ENCODE measurements at regions of chr12 and their contacts with region 1.

Region 1: DNA sequence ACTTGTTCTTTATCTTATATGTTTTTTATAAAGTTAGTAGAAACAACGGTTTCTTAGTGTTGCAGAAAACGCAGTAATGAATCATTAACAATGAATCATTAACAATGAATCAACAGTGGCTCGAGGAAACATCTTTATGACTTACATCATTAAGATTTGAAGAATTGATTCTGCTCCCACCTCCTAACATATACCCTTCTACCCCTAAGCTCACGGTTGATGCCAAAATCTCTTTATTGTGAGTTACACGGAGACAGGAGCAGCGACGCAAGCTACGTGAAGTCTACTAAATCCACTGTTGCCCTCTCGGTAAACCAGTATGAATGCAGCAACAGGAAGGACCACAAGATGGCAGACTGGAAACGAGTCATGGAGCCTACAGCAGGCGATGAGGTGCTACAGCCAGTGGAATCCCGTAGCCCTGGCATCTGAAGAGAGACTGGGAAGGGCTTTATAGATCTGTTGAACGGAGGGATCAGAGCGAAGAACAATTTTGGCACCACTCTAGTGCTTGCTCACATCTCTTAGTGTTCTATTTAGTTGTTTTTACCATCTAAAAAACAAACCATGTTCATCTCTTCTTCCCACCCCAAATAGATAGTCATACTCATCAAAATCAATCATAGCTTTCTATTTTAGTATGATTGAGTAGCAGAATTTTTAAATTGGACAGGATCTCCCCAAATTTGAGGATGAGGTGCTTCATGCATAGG is 332.7 kb downstream of the DUSP6 start:
- DNase-seq: peak; percentile 48 to 83 (median 64)
- ATAC-seq: peak; percentile 97
- H3K4me3 ChIP-seq: peak overlapping the region in 1 of 2 experiments; percentile 16
- H3K4me3 Mint-ChIP-seq: no peak overlapping the region
- H3K27ac ChIP-seq: no peak overlapping the region
- H3K27ac Mint-ChIP-seq: no peak overlapping the region
- H3K4me1 ChIP-seq: no peaks in the 10 kb centered on the region
- H3K4me1 Mint-ChIP-seq: peaks cover 3% of the 10 kb centered on the region
- H3K27me3 ChIP-seq: peaks cover 0 to 2% of the 10 kb centered on the region in 2 experiments
- H3K27me3 Mint-ChIP-seq: peaks cover 6% of the 10 kb centered on the region
- CTCF ChIP-seq: peak; percentile 76

Region 2: GRCh38 chr12:88111074-88111652 is 908.4 kb before region 1 on chr12:
- CTCF ChIA-PET with region 1: no interaction called
- POLR2A ChIA-PET with region 1: no interaction called
- intact Hi-C with region 1: loop called in 1 of 2 experiments (anchors 5 kb)
- DNase-seq: peak in 2 of 9 experiments; percentile 29 to 44
- ATAC-seq: no peak
- H3K4me3 ChIP-seq: no peak overlapping the region
- H3K4me3 Mint-ChIP-seq: no peak overlapping the region
- H3K27ac ChIP-seq: no peak overlapping the region
- H3K27ac Mint-ChIP-seq: no peak overlapping the region
- H3K4me1 ChIP-seq: no peaks in the 10 kb centered on the region
- H3K4me1 Mint-ChIP-seq: peaks cover 2% of the 10 kb centered on the region
- H3K27me3 ChIP-seq: no peaks in the 10 kb centered on the region
- H3K27me3 Mint-ChIP-seq: no peaks in the 10 kb centered on the region
- CTCF ChIP-seq: peak; percentile 46

Region 3: GRCh38 chr12:89040146-89040964 is 20.8 kb after region 1 on chr12:
- CTCF ChIA-PET with region 1: interaction called, 78 read pairs
- POLR2A ChIA-PET with region 1: no interaction called
- intact Hi-C with region 1: loop called in 1 of 2 experiments (anchors 2 kb)
- DNase-seq: peak; percentile 12 to 72 (median 57)
- ATAC-seq: peak; percentile 85
- H3K4me3 ChIP-seq: no peak overlapping the region
- H3K4me3 Mint-ChIP-seq: peak overlapping the region; percentile 36
- H3K27ac ChIP-seq: peak overlapping the region in 1 of 2 experiments; percentile 24
- H3K27ac Mint-ChIP-seq: peak overlapping the region; percentile 45
- H3K4me1 ChIP-seq: peaks cover 14% of the 10 kb centered on the region
- H3K4me1 Mint-ChIP-seq: peaks cover 25% of the 10 kb centered on the region
- H3K27me3 ChIP-seq: no peaks in the 10 kb centered on the region
- H3K27me3 Mint-ChIP-seq: no peaks in the 10 kb centered on the region
- CTCF ChIP-seq: no peak

Region 4: GRCh38 chr12:89084751-89085150 is 65.2 kb after region 1 on chr12:
- CTCF ChIA-PET with region 1: no interaction called
- POLR2A ChIA-PET with region 1: no interaction called
- intact Hi-C with region 1: no loop called
- DNase-seq: no peak
- ATAC-seq: no peak
- H3K4me3 ChIP-seq: no peak overlapping the region
- H3K4me3 Mint-ChIP-seq: no peak overlapping the region
- H3K27ac ChIP-seq: no peak overlapping the region
- H3K27ac Mint-ChIP-seq: no peak overlapping the region
- H3K4me1 ChIP-seq: no peaks in the 10 kb centered on the region
- H3K4me1 Mint-ChIP-seq: no peaks in the 10 kb centered on the region
- H3K27me3 ChIP-seq: no peaks in the 10 kb centered on the region
- H3K27me3 Mint-ChIP-seq: peaks cover 6% of the 10 kb centered on the region
- CTCF ChIP-seq: no peak

Region 5: DNA sequence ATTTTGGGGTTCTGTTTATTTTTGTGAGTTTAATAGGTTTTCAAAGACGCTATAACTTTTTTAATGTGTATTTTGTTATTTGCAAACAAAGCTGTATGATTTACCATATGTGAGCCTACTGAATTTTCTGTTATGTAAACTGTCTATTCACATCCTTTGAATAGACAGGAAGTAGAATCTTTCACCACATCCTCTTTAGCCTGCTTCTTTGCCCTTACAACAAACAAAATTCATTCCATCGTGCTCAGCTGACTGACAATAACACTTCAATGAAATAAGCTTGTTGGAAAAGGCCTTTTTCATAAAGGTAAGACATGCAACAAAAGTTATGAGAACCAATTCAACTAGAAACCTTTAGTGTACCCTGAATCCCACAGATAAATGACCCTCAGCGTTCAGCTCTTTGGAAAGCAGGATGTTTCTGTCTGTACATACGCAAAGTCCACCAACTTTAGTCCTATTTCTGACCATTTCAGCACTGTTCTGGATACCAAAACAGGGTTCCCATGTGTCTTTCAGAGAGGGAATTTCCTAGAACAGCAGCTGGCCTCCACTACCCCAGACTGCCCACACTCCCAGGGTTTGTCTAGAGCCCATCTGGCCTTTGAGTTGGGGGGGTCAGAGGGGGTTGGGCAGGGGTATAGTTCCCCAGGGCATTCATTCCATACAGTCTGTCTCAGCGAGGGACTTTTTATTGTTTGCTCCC is 261.4 kb after region 1 on chr12:
- CTCF ChIA-PET with region 1: no interaction called
- POLR2A ChIA-PET with region 1: no interaction called
- intact Hi-C with region 1: no loop called
- DNase-seq: peak in 2 of 9 experiments; percentile 47 to 56
- ATAC-seq: no peak
- H3K4me3 ChIP-seq: peak overlapping the region in 1 of 2 experiments; percentile 3
- H3K4me3 Mint-ChIP-seq: no peak overlapping the region
- H3K27ac ChIP-seq: peak overlapping the region in 1 of 2 experiments; percentile 49
- H3K27ac Mint-ChIP-seq: no peak overlapping the region
- H3K4me1 ChIP-seq: peaks cover 19% of the 10 kb centered on the region
- H3K4me1 Mint-ChIP-seq: peaks cover 9% of the 10 kb centered on the region
- H3K27me3 ChIP-seq: no peaks in the 10 kb centered on the region
- H3K27me3 Mint-ChIP-seq: no peaks in the 10 kb centered on the region
- CTCF ChIP-seq: no peak

Region 6: GRCh38 chr12:89352492-89353187 is 333.1 kb after region 1 on chr12 and contains the start of gene DUSP6:
- CTCF ChIA-PET with region 1: interaction called, 4 read pairs
- POLR2A ChIA-PET with region 1: no interaction called
- intact Hi-C with region 1: loop called in 1 of 2 experiments (anchors 5 kb)
- DNase-seq: peak; percentile 55 to 91 (median 76)
- ATAC-seq: peak; percentile 71
- H3K4me3 ChIP-seq: peak within 1 kb of the TSS; percentile 54 to 74
- H3K4me3 Mint-ChIP-seq: peak within 1 kb of the TSS; percentile 91
- H3K27ac ChIP-seq: peak within 1 kb of the TSS; percentile 45 to 55
- H3K27ac Mint-ChIP-seq: peak within 1 kb of the TSS; percentile 88
- H3K4me1 ChIP-seq: peaks cover 24% of the 10 kb centered on the region
- H3K4me1 Mint-ChIP-seq: peaks cover 43% of the 10 kb centered on the region
- H3K27me3 ChIP-seq: no peaks in the 10 kb centered on the region
- H3K27me3 Mint-ChIP-seq: peaks cover 3% of the 10 kb centered on the region
- CTCF ChIP-seq: no peak
- total RNA-seq, gene DUSP6: 3.0 to 3.9 TPM

Region 7: DNA sequence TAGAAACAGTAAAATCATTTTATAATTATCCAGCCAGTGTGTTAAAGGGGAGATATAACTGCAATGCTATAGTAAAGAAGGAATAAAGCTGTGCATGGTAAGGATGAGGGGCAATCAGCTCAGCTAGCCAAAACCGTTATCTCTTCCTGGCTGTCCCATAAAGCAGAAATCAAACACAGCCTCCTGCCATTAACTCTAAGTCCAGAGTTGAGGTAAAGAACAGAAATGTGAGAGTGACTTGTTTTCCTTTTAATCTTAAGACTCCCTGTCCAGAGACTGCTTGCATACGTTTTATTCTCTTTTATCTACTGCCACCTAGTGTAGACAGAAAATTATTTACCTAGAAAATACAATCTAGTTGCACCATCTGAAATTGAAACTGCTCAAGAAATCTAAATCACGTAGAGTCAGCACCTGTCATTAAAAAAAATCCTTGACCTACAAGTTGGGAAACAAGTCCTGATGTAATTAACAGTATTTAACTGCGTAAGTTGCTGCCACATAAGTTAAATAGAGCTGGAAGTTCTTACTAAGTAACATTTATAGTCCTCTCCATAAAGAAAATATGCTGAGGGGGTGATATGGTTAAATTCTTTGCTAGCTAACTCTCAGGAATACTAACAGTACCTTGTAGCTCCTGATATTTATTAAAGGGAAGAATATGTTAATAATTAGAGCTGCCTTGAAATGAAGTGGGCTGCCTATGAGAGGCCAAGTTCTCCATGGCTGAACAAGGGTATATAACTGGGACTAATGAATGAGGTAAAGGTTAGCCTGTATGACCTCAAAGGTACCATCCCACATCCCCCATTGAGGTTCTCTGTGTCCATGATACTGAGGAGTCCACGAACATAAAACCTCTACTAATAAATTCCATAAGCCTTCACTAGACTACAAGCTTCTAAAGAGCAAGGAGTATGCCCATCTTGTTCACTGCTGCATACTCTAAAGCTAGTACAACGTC is 442.4 kb after region 1 on chr12:
- CTCF ChIA-PET with region 1: interaction called, 56 read pairs
- POLR2A ChIA-PET with region 1: interaction called, 3 read pairs
- intact Hi-C with region 1: loop called (anchors 1 kb)
- DNase-seq: peak in 2 of 9 experiments; percentile 59 to 71
- ATAC-seq: peak; percentile 73
- H3K4me3 ChIP-seq: no peak overlapping the region
- H3K4me3 Mint-ChIP-seq: peak overlapping the region; percentile 50
- H3K27ac ChIP-seq: no peak overlapping the region
- H3K27ac Mint-ChIP-seq: no peak overlapping the region
- H3K4me1 ChIP-seq: peaks cover 5% of the 10 kb centered on the region
- H3K4me1 Mint-ChIP-seq: peaks cover 20% of the 10 kb centered on the region
- H3K27me3 ChIP-seq: no peaks in the 10 kb centered on the region
- H3K27me3 Mint-ChIP-seq: no peaks in the 10 kb centered on the region
- CTCF ChIP-seq: peak; percentile 77

Region 8: DNA sequence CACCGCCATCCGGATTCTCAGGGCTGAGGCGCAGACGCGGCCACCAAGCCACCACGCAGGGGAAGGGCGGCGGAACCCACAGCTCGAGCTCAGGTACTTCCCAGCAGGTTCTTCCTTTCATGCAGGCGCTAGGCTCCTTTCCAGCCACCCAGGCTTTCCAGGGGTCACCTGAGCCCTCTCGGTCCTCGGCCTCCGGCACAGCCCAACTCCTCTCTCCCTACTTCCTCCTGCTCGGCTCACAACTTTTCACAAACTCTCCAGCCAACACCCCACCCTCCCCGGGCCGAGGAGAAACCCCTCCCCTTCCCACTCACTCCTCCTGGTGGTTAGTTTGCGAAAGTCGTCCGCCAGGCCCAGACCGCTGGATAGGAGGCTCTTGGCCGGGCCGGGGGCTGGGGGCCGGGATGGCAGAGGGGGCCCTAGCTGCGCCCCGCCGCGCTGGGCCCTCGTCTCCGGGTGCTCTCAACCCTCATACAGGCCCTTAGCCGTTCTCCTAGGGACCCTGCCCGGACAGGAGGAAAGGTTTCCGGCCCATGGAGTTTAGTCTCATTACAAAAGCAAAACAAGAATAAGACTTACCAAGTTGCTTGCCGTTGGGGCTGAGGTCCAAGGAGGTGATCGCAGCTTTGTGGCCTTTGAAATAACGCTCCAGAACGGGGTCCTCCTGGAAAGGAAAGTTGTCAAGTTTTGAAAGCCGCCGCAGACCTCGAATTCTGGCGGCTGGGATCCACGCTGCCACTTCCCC is 505.1 kb after region 1 on chr12 and contains the start of gene GALNT4:
- CTCF ChIA-PET with region 1: interaction called, 109 read pairs
- POLR2A ChIA-PET with region 1: interaction called, 5 read pairs
- intact Hi-C with region 1: loop called (anchors 1 kb)
- DNase-seq: peak; percentile 45 to 88 (median 74)
- ATAC-seq: peak; percentile 70
- H3K4me3 ChIP-seq: peak within 1 kb of the TSS; percentile 78 to 93
- H3K4me3 Mint-ChIP-seq: peak within 1 kb of the TSS; percentile 92
- H3K27ac ChIP-seq: peak within 1 kb of the TSS; percentile 70 to 86
- H3K27ac Mint-ChIP-seq: peak within 1 kb of the TSS; percentile 87
- H3K4me1 ChIP-seq: peaks cover 28% of the 10 kb centered on the region
- H3K4me1 Mint-ChIP-seq: peaks cover 61% of the 10 kb centered on the region
- H3K27me3 ChIP-seq: no peaks in the 10 kb centered on the region
- H3K27me3 Mint-ChIP-seq: no peaks in the 10 kb centered on the region
- CTCF ChIP-seq: peak; percentile 41
- total RNA-seq, gene GALNT4: 4.6 to 5.3 TPM

Region 9: GRCh38 chr12:90959538-90960139 is 1940.1 kb after region 1 on chr12:
- CTCF ChIA-PET with region 1: no interaction called
- POLR2A ChIA-PET with region 1: no interaction called
- intact Hi-C with region 1: loop called (anchors 1 to 10 kb)
- DNase-seq: peak in 3 of 9 experiments; percentile 9 to 49 (median 37)
- ATAC-seq: no peak
- H3K4me3 ChIP-seq: no peak overlapping the region
- H3K4me3 Mint-ChIP-seq: no peak overlapping the region
- H3K27ac ChIP-seq: no peak overlapping the region
- H3K27ac Mint-ChIP-seq: no peak overlapping the region
- H3K4me1 ChIP-seq: no peaks in the 10 kb centered on the region
- H3K4me1 Mint-ChIP-seq: no peaks in the 10 kb centered on the region
- H3K27me3 ChIP-seq: no peaks in the 10 kb centered on the region
- H3K27me3 Mint-ChIP-seq: peaks cover 2% of the 10 kb centered on the region
- CTCF ChIP-seq: peak; percentile 70